Activated T-helper 1 cell treated with anti-CD3 and anti-CD28 coated beads, Interleukin-12 subunit alpha, Interleukin-12 subunit beta, Interleukin-2, Interleukin-4 antibody, amounts not matched to agents 30 ng/mL and 10 ng/mL and 1 ng/mL, durations not matched to agents 14 hours and 24 hours and 36 hours (primary cell): ENCODE measurements at regions of chr6 and their contacts with region 1.

Region 1: GRCh38 chr6:12011276-12012076 is 636 bp upstream of the HIVEP1 start:
- DNase-seq: peak; percentile 92
- H3K4me3 Mint-ChIP-seq: peak overlapping the region; percentile 97
- H3K27ac Mint-ChIP-seq: peak overlapping the region; percentile 97
- H3K4me1 Mint-ChIP-seq: peaks cover 62% of the 10 kb centered on the region
- H3K27me3 Mint-ChIP-seq: no peaks in the 10 kb centered on the region

Region 2: GRCh38 chr6:11575408-11576033 is 436.0 kb before region 1 on chr6:
- intact Hi-C with region 1: no loop called
- DNase-seq: peak; percentile 37
- H3K4me3 Mint-ChIP-seq: no peak overlapping the region
- H3K27ac Mint-ChIP-seq: no peak overlapping the region
- H3K4me1 Mint-ChIP-seq: no peaks in the 10 kb centered on the region
- H3K27me3 Mint-ChIP-seq: peaks cover 2% of the 10 kb centered on the region

Region 3: GRCh38 chr6:11700118-11700718 is 311.3 kb before region 1 on chr6:
- intact Hi-C with region 1: loop called (anchors 2 kb)
- DNase-seq: no peak
- H3K4me3 Mint-ChIP-seq: no peak overlapping the region
- H3K27ac Mint-ChIP-seq: peak overlapping the region; percentile 37
- H3K4me1 Mint-ChIP-seq: peaks cover 26% of the 10 kb centered on the region
- H3K27me3 Mint-ChIP-seq: no peaks in the 10 kb centered on the region

Region 4: GRCh38 chr6:11824986-11825385 is 186.5 kb before region 1 on chr6:
- intact Hi-C with region 1: loop called (anchors 1 kb)
- DNase-seq: peak; percentile 16
- H3K4me3 Mint-ChIP-seq: no peak overlapping the region
- H3K27ac Mint-ChIP-seq: peak overlapping the region; percentile 79
- H3K4me1 Mint-ChIP-seq: peaks cover 25% of the 10 kb centered on the region
- H3K27me3 Mint-ChIP-seq: peaks cover 1% of the 10 kb centered on the region

Region 5: DNA sequence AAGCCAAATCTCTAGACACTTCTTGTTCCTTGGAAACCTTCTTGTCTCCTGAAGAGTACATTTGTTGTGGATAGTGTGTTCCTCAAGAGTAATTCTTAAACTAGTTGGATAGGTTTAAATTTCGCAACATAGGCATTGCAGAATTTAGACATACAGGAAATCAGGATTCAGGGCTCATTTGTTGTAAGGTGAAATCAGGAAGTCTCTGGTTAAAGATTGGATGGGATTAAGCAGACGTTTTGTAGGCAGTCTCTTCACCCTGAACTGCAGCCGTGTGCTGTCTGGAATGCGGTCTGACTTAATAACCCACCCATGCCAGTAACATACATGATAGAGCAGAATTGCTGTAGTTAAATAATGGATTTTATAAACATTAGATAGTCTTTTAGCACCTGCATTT is 22.3 kb after region 1 on chr6:
- intact Hi-C with region 1: loop called (anchors 2 kb)
- DNase-seq: no peak
- H3K4me3 Mint-ChIP-seq: no peak overlapping the region
- H3K27ac Mint-ChIP-seq: no peak overlapping the region
- H3K4me1 Mint-ChIP-seq: peaks cover 71% of the 10 kb centered on the region
- H3K27me3 Mint-ChIP-seq: no peaks in the 10 kb centered on the region

Region 6: GRCh38 chr6:12119085-12119588 is 107.7 kb after region 1 on chr6:
- intact Hi-C with region 1: loop called (anchors 1 kb)
- DNase-seq: peak; percentile 77
- H3K4me3 Mint-ChIP-seq: peak overlapping the region; percentile 36
- H3K27ac Mint-ChIP-seq: peak overlapping the region; percentile 83
- H3K4me1 Mint-ChIP-seq: peaks cover 67% of the 10 kb centered on the region
- H3K27me3 Mint-ChIP-seq: no peaks in the 10 kb centered on the region